ENCODE measurements at regions of chr14 and their contacts with region 1.

Region 1: DNA sequence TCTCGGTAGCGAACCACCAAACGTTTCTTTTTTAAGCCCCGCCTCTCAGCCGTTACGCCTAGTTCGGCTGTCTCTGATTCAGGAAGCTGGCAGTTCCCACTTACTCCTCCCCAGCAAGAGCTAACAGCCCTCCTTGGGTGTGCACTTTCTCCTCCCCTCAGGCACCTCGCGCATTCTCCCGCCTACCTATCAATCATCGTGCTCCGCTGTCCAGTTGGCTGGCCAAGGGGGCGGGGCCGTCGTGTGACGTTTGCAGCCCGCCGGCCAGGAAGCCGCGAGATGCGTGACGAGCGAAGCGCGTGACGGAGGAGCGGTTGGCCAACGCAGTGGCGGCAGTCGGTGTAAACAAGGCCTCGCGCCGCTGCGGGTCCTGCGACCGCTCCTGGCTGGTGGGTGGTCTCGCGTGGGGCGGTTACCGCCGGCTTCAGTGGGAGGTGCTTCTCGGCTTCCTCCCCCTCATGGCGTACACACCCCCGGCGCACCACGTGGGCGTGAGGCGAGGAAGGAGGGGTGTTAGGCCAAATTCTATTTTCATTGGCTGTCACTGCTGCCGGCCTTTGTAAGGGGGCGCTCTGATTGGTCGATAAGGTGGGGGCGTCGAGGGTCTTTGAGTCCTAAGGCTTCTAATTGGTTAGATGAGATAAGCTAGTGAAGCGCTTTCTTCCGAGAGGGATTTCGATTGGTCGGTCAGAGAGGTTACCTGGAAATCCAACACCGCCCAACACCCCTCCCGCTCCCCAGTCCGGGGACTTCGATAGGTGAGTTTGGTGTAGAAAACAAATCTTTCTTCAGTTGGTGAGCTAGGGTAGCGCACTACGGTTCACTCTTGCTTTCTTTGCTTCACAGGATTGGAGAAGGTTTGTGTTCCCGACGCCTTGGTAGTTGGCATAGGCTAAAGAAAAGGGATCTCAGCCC is at the starts of genes DCAF11 and NRL:
- DNase-seq: peak; percentile 95 to 100 (median 98)
- ATAC-seq: peak; percentile 81
- H3K4me3 ChIP-seq: peak within 1 kb of the TSS; percentile 77
- H3K4me3 Mint-ChIP-seq: peak within 1 kb of the TSS; percentile 98
- H3K27ac ChIP-seq: peak within 1 kb of the TSS; percentile 98 to 99
- H3K27ac Mint-ChIP-seq: peak within 1 kb of the TSS; percentile 98
- H3K4me1 ChIP-seq: peaks cover 42% of the 10 kb centered on the region
- H3K4me1 Mint-ChIP-seq: peaks cover 35% of the 10 kb centered on the region
- H3K27me3 ChIP-seq: no peaks in the 10 kb centered on the region
- H3K27me3 Mint-ChIP-seq: no peaks in the 10 kb centered on the region
- CTCF ChIP-seq: no peak
- total RNA-seq, gene DCAF11: 74.8 to 75.3 TPM
- total RNA-seq, gene NRL: 1.6 to 1.9 TPM

Region 2: DNA sequence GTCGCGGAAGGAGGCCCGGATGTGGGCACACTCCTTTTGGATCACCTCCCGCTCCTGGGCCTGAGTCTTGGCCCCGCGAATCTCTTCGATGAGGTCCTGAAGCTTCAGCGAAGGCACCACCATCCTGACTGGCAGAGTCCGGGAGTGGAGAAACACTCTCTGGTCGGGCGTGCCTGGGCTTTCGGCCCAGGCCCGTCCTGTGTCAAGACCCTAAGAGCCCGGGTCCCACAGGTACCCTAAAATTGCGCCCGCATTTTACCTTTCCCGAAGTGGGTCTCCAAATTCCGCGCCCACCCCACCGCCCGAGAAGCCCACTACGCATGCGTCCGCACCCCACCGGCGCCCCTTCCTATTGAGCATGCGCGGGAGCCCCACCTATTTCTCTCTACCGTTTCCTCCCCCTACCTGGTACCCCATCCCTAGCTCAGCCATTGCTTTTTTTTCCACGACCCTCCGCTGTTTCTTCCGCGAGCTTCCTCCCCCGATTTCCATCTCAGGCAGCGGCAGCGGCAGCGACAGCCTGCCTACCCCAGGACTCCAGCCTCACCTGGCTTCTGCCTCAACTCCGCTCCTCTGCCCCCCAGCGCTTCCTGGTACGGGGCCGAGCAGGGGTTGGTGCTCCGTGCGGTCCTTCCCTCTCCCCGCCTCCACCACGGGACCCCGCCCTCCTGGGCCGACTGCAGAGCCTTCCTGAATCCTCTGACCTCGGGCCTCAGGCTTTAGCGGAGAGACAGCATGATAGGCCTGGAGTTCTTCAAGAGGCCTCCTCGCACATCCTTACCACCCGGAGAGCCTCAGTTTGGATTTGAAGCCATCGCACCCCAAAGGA is 547.4 kb before region 1 on chr14 and contains the start of gene AP1G2:
- CTCF ChIA-PET with region 1: no interaction called
- POLR2A ChIA-PET with region 1: no interaction called
- intact Hi-C with region 1: loop called in 1 of 2 experiments (anchors 10 kb)
- DNase-seq: peak; percentile 69 to 94 (median 83)
- ATAC-seq: peak; percentile 91
- H3K4me3 ChIP-seq: peak within 1 kb of the TSS; percentile 75
- H3K4me3 Mint-ChIP-seq: peak within 1 kb of the TSS; percentile 99
- H3K27ac ChIP-seq: peak within 1 kb of the TSS; percentile 75 to 79
- H3K27ac Mint-ChIP-seq: peak within 1 kb of the TSS; percentile 96
- H3K4me1 ChIP-seq: peaks cover 40% of the 10 kb centered on the region
- H3K4me1 Mint-ChIP-seq: peaks cover 52% of the 10 kb centered on the region
- H3K27me3 ChIP-seq: no peaks in the 10 kb centered on the region
- H3K27me3 Mint-ChIP-seq: peaks cover 7% of the 10 kb centered on the region
- CTCF ChIP-seq: no peak
- total RNA-seq, gene AP1G2: 193 to 198 TPM

Region 3: DNA sequence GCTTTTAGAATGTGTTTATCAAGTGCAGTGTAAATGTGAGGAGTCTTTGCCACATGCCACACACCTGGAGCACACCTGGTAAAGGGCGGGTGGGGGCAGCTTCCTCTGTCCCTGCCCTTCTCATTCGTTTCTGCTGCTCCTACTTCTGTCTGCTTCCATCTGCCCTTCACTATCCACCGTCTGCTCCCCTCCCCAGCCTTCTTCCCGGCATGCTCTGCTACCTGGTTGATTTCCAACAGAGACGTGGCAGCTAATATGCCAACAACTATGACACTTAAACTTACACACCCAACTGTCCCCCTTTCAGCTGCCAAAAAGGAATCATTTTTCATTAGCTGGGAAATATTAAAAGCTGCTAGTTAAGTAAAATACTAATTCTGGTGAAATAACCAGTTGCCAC is 72.0 kb before region 1 on chr14:
- CTCF ChIA-PET with region 1: no interaction called
- POLR2A ChIA-PET with region 1: no interaction called
- intact Hi-C with region 1: no loop called
- DNase-seq: no peak
- ATAC-seq: no peak
- H3K4me3 ChIP-seq: no peak overlapping the region
- H3K4me3 Mint-ChIP-seq: no peak overlapping the region
- H3K27ac ChIP-seq: no peak overlapping the region
- H3K27ac Mint-ChIP-seq: no peak overlapping the region
- H3K4me1 ChIP-seq: no peaks in the 10 kb centered on the region
- H3K4me1 Mint-ChIP-seq: no peaks in the 10 kb centered on the region
- H3K27me3 ChIP-seq: no peaks in the 10 kb centered on the region
- H3K27me3 Mint-ChIP-seq: no peaks in the 10 kb centered on the region
- CTCF ChIP-seq: no peak

Region 4: GRCh38 chr14:24093901-24094761 is 20.7 kb before region 1 on chr14 and contains the start of gene PCK2:
- CTCF ChIA-PET with region 1: interaction called, 48 read pairs
- POLR2A ChIA-PET with region 1: interaction called, 72 read pairs
- intact Hi-C with region 1: loop called (anchors 1 to 2 kb)
- DNase-seq: peak; percentile 53 to 82 (median 67)
- ATAC-seq: peak; percentile 77
- H3K4me3 ChIP-seq: peak within 1 kb of the TSS; percentile 97
- H3K4me3 Mint-ChIP-seq: peak within 1 kb of the TSS; percentile 97
- H3K27ac ChIP-seq: peak within 1 kb of the TSS; percentile 71 to 78
- H3K27ac Mint-ChIP-seq: peak within 1 kb of the TSS; percentile 90
- H3K4me1 ChIP-seq: peaks cover 29% of the 10 kb centered on the region
- H3K4me1 Mint-ChIP-seq: peaks cover 37% of the 10 kb centered on the region
- H3K27me3 ChIP-seq: no peaks in the 10 kb centered on the region
- H3K27me3 Mint-ChIP-seq: no peaks in the 10 kb centered on the region
- CTCF ChIP-seq: no peak
- total RNA-seq, gene PCK2: 5.2 to 7.4 TPM

Region 5: GRCh38 chr14:24141097-24141880 is 26.5 kb after region 1 on chr14 and contains the start of gene EMC9:
- CTCF ChIA-PET with region 1: interaction called, 15 read pairs
- POLR2A ChIA-PET with region 1: interaction called, 296 read pairs
- intact Hi-C with region 1: loop called (anchors 1 to 2 kb)
- DNase-seq: peak; percentile 97 to 100 (median 99)
- ATAC-seq: peak; percentile 90
- H3K4me3 ChIP-seq: peak within 1 kb of the TSS; percentile 92
- H3K4me3 Mint-ChIP-seq: peak within 1 kb of the TSS; percentile 95
- H3K27ac ChIP-seq: peak within 1 kb of the TSS; percentile 62 to 71
- H3K27ac Mint-ChIP-seq: peak within 1 kb of the TSS; percentile 90
- H3K4me1 ChIP-seq: peaks cover 73% of the 10 kb centered on the region
- H3K4me1 Mint-ChIP-seq: peaks cover 76% of the 10 kb centered on the region
- H3K27me3 ChIP-seq: no peaks in the 10 kb centered on the region
- H3K27me3 Mint-ChIP-seq: no peaks in the 10 kb centered on the region
- CTCF ChIP-seq: no peak
- total RNA-seq, gene EMC9: 11.8 to 13.1 TPM

Region 6: DNA sequence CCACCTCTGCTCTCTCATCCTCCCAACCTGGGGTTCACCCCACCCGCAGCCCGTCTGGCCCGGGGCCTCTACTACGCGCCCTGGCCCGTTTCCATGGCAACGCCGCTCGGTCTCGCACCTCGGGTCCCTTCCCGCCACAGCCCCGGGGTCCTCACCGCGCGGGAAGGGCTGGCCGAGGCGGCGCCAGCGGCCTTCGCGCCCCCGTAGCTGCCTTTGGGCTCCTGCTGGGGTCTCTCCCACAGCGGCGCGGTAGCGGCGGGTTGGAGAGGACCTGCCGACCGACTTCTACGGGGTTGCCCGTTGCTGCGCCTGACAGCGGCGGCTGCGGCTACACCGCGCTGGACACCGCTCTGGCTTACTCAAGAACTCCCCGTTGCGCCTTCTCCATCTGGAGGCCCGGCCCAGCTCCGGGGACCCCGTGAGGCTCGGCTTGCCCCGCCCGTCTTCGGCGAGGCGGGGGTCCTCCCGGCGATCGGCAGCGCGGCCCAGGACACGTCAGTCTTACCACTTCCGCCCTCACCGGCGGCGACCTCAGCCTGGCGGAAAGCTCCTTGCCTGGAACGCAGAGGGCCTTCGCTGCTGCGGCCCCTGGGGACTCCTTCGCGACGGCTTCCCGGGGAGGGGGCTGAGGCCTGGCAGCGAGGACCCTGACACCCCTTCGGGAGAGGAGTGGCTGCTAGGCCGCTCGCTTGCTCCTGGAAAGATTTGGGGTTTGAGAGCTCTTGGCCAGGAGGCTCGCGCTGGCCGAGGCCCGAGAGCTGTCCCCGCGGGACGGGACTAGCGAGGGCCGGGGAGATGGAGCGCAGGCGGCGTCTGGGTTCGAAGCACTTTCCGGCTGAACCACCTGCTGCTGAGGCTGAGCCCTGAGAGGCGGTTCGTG is 80.6 kb after region 1 on chr14 and contains the start of gene TM9SF1:
- CTCF ChIA-PET with region 1: no interaction called
- POLR2A ChIA-PET with region 1: interaction called, 23 read pairs
- intact Hi-C with region 1: no loop called
- DNase-seq: peak; percentile 78 to 95 (median 86)
- ATAC-seq: peak; percentile 88
- H3K4me3 ChIP-seq: peak within 1 kb of the TSS; percentile 93
- H3K4me3 Mint-ChIP-seq: peak within 1 kb of the TSS; percentile 87
- H3K27ac ChIP-seq: peak within 1 kb of the TSS; percentile 97 to 99
- H3K27ac Mint-ChIP-seq: peak within 1 kb of the TSS; percentile 92
- H3K4me1 ChIP-seq: peaks cover 37% of the 10 kb centered on the region
- H3K4me1 Mint-ChIP-seq: peaks cover 51% of the 10 kb centered on the region
- H3K27me3 ChIP-seq: no peaks in the 10 kb centered on the region
- H3K27me3 Mint-ChIP-seq: no peaks in the 10 kb centered on the region
- CTCF ChIP-seq: no peak
- total RNA-seq, gene TM9SF1: 12.9 to 13.0 TPM

Region 7: GRCh38 chr14:24299255-24300195 is 184.7 kb after region 1 on chr14 and contains the starts of genes DHRS1 and NOP9:
- CTCF ChIA-PET with region 1: interaction called, 3 read pairs
- POLR2A ChIA-PET with region 1: interaction called, 9 read pairs
- intact Hi-C with region 1: loop called in 1 of 2 experiments (anchors 5 kb)
- DNase-seq: peak; percentile 86 to 98 (median 92)
- ATAC-seq: peak; percentile 77
- H3K4me3 ChIP-seq: peak within 1 kb of the TSS; percentile 87
- H3K4me3 Mint-ChIP-seq: peak within 1 kb of the TSS; percentile 99
- H3K27ac ChIP-seq: peak within 1 kb of the TSS; percentile 81 to 87
- H3K27ac Mint-ChIP-seq: peak within 1 kb of the TSS; percentile 98
- H3K4me1 ChIP-seq: peaks cover 56% of the 10 kb centered on the region
- H3K4me1 Mint-ChIP-seq: peaks cover 64% of the 10 kb centered on the region
- H3K27me3 ChIP-seq: no peaks in the 10 kb centered on the region
- H3K27me3 Mint-ChIP-seq: no peaks in the 10 kb centered on the region
- CTCF ChIP-seq: no peak
- total RNA-seq, gene DHRS1: 21.5 to 23.5 TPM
- total RNA-seq, gene NOP9: 25.9 to 27.5 TPM

Region 8: DNA sequence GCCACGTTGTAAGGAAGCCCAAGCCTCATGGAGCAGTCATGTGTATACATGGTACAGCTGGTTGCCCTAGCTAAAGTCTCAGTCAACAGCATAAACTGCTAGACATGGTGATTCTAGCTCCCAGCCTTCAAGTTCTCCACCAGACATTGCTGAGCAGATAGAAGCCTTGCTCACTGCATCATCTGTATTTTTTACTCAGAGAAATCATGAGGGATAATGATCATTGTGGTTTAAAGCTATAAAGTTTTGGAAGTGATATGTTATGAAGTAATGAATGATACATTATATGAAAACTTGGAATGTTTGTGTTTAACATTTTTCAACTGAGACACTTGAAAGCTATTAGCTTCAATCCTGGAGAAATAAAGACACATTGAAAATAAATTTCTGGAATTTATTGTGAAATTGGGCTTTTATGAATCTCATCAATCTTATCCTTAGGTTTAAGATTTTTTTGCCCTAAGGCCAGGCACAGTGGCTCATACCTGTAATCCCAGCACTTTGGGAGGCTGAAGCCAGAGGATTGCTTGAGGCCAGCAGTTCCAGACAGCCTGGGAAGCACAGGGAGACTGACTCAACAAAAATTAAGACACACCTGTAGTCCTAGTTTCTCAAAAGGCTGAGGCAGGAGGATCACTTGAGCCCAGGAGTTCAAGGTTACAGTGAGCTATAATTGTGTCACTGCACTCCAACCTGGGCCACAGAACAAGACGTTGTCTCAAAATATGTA is 247.6 kb after region 1 on chr14:
- CTCF ChIA-PET with region 1: no interaction called
- POLR2A ChIA-PET with region 1: no interaction called
- intact Hi-C with region 1: no loop called
- DNase-seq: no peak
- ATAC-seq: no peak
- H3K4me3 ChIP-seq: no peak overlapping the region
- H3K4me3 Mint-ChIP-seq: no peak overlapping the region
- H3K27ac ChIP-seq: no peak overlapping the region
- H3K27ac Mint-ChIP-seq: no peak overlapping the region
- H3K4me1 ChIP-seq: peaks cover 20% of the 10 kb centered on the region
- H3K4me1 Mint-ChIP-seq: peaks cover 18% of the 10 kb centered on the region
- H3K27me3 ChIP-seq: peaks cover 42 to 43% of the 10 kb centered on the region in 2 experiments
- H3K27me3 Mint-ChIP-seq: peaks cover 60% of the 10 kb centered on the region
- CTCF ChIP-seq: no peak